Dorsolateral prefrontal cortex (tissue), 120 donors: ENCODE measurements at regions of chr9 and their contacts with region 1.

Region 1: GRCh38 chr9:129650680-129651235 is 8.8 kb upstream of the ASB6 start:
- DNase-seq: no peak
- H3K4me3 ChIP-seq: no peak overlapping the region
- H3K27ac ChIP-seq: peak overlapping the region in 1 of 59 donors; percentile 6
- H3K27me3 ChIP-seq: no peaks in the 10 kb centered on the region
- CTCF ChIP-seq: no peak

Region 2: GRCh38 chr9:129676975-129677841 is 26.4 kb after region 1 on chr9:
- intact Hi-C with region 1: no loop called
- DNase-seq: no peak
- H3K4me3 ChIP-seq: no peak overlapping the region
- H3K27ac ChIP-seq: no peak overlapping the region
- H3K27me3 ChIP-seq: peaks cover 0 to 20% (median 0%) of the 10 kb centered on the region in 45 donors
- CTCF ChIP-seq: no peak

Region 3: DNA sequence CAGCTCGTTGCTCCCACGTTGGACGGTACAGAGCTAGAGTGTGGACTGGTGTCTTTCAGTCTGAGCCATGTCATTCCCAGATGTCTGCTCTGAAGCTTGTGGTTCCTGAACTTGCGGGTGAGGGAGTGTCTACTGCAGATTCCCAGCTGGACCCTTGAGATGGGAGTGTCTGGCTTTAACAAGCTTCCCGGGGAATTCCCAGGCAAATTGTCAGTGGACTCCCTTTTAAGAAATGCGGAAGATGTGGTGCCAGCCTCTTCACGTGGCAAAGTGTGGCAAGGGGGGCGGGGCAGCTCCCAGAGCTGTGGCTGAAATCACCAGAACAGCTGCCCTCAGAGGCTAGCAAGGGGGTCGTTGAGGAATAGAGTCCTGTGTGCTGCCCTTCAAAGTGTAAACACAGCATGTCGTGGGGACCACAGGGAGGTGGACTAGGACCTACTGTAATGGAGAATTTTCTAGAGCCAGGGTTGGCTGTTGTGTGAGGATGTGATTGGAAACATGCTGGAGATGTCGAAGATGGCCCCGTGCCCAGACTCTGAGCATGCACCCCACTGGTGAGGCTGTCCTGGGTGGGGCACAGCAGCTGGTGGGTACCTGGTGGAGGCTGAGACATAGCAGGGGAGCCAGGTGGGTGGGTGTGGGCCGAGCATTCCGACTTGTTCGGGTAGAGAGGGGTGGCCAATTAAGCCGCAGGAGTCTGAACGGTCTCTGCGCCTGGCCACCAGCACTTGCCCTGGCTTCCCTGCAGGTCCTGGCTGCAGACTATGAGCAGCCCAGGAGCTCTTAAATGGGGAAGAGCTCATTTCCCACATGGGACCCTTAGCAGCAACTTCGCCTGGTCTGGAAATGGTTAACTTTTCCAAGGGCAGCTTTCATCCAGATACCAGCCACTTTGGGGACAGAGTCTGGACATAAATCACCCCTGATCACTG is 52.1 kb after region 1 on chr9:
- intact Hi-C with region 1: no loop called
- DNase-seq: no peak
- H3K4me3 ChIP-seq: no peak overlapping the region
- H3K27ac ChIP-seq: peak overlapping the region in 2 of 59 donors; percentile 1 to 43
- H3K27me3 ChIP-seq: peaks cover 0 to 10% (median 0%) of the 10 kb centered on the region in 45 donors
- CTCF ChIP-seq: no peak

Region 4: GRCh38 chr9:129720181-129720864 is 69.6 kb after region 1 on chr9:
- intact Hi-C with region 1: loop called in 1 of 2 experiments (anchors 5 kb)
- DNase-seq: no peak
- H3K4me3 ChIP-seq: no peak overlapping the region
- H3K27ac ChIP-seq: no peak overlapping the region
- H3K27me3 ChIP-seq: peaks cover 0 to 9% (median 0%) of the 10 kb centered on the region in 45 donors
- CTCF ChIP-seq: peak in 2 of 56 donors; percentile 12 to 24

Region 5: DNA sequence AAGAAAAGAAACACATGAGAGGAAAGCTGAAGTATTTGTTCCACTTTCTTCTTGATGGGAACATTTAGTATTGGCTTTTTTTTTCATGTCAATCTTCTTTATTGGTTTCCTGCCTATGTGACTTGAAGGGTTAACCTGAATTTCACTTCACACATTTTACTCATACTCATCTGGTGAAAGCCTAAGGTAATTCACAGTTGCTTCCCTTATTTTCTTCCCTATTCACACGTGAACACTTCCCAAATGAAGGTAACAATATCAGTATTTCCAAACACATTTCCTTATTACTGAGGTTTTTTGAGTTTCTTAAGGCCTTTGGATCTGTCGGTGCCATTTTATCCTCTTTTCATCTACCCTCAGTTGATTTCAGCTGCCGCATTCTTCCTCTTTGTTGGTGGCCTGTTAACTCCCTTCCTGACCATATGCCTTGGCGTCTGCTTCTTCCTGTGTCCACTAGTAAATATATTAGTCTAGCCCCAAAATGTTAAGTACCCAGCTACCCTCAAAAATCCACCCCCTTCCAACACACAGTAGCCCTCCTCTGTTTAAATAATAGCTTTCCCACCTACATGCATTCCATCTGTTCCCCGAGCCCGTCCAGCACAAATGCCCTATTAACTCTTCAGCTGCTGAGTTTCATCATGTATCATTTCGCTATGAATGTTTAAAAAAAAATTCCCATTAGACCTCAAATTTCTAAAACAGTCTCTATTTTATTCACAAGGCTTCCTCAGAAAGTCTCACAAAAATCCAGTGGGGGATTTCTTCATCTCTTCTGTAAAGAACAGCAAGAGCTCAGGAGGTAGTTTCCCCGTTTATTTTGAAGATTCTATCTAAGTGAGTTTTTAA is 281.8 kb after region 1 on chr9:
- intact Hi-C with region 1: no loop called
- DNase-seq: peak in 1 of 10 donors; percentile 77
- H3K4me3 ChIP-seq: peak overlapping the region in 11 of 59 donors; percentile 0 to 38 (median 10)
- H3K27ac ChIP-seq: peak overlapping the region; percentile 38 to 96 (median 88)
- H3K27me3 ChIP-seq: no peaks in the 10 kb centered on the region
- CTCF ChIP-seq: no peak